CD4-positive, alpha-beta memory T cell (primary cell): ENCODE measurements at regions of chr15 and their contacts with region 1.

Region 1: GRCh38 chr15:52488830-52489229 is 39.9 kb downstream of the MYO5A start:
- DNase-seq: no peak
- H3K4me3 ChIP-seq: no peak overlapping the region
- H3K4me3 Mint-ChIP-seq: peak overlapping the region; percentile 21 to 88 (median 62)
- H3K27ac ChIP-seq: no peak overlapping the region
- H3K27ac Mint-ChIP-seq: peak overlapping the region; percentile 7 to 91 (median 72)
- H3K4me1 ChIP-seq: peaks cover 79% of the 10 kb centered on the region
- H3K4me1 Mint-ChIP-seq: peaks cover 48 to 80% (median 66%) of the 10 kb centered on the region in 4 donors
- H3K27me3 ChIP-seq: no peaks in the 10 kb centered on the region
- H3K27me3 Mint-ChIP-seq: no peaks in the 10 kb centered on the region

Region 2: DNA sequence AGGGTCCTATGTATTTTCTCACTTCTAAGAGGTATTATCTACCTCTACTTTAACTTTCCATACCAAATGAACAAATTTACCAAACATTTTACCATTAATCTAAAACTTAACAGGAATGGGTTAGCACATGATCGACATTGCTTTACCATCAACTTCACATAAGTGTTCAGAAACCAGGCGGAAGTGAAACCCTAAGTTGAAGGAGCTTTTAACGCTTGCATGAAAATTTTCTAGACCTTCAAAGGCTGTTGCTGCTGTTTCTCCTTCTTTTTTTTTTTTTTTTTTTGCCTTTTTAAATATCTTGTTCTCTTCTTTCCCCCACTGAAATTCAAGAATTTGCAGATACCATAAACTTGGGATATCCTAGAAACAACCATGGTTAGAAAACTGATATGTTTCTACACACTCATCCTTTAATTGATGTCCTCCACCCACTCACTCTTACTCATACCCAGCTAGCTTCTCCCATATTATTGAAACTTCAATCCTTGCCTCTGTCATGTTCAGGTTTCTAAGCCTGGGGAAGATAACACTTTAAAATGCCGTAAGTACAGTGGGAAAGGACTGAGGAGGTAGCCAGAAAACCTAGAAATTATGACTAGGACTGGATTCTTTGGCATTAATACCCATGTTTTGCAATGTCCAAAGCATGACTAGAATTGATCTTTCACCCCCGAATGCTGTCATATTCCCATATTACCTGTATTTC is 15.1 kb after region 1 on chr15:
- CTCF ChIA-PET with region 1: interaction called, 5 read pairs
- POLR2A ChIA-PET with region 1: interaction called, 4 read pairs
- intact Hi-C with region 1: loop called (anchors 2 kb)
- DNase-seq: no peak
- H3K4me3 ChIP-seq: no peak overlapping the region
- H3K4me3 Mint-ChIP-seq: peak overlapping the region; percentile 27 to 86 (median 64)
- H3K27ac ChIP-seq: no peak overlapping the region
- H3K27ac Mint-ChIP-seq: peak overlapping the region in 6 of 7 donors; percentile 22 to 79 (median 53)
- H3K4me1 ChIP-seq: peaks cover 30% of the 10 kb centered on the region
- H3K4me1 Mint-ChIP-seq: peaks cover 37 to 54% (median 45%) of the 10 kb centered on the region in 4 donors
- H3K27me3 ChIP-seq: no peaks in the 10 kb centered on the region
- H3K27me3 Mint-ChIP-seq: no peaks in the 10 kb centered on the region